Activated CD4-positive, alpha-beta memory T cell treated with anti-CD3 and anti-CD28 coated beads for 36 hours (primary cell): ENCODE measurements at regions of chr4 and their contacts with region 1.

Region 1: GRCh38 chr4:185576962-185577950 is 41.9 kb upstream of the PDLIM3 start:
- DNase-seq: no peak
- H3K4me3 Mint-ChIP-seq: no peak overlapping the region
- H3K27ac Mint-ChIP-seq: no peak overlapping the region
- H3K4me1 Mint-ChIP-seq: no peaks in the 10 kb centered on the region
- H3K27me3 Mint-ChIP-seq: peaks cover 12% of the 10 kb centered on the region

Region 2: DNA sequence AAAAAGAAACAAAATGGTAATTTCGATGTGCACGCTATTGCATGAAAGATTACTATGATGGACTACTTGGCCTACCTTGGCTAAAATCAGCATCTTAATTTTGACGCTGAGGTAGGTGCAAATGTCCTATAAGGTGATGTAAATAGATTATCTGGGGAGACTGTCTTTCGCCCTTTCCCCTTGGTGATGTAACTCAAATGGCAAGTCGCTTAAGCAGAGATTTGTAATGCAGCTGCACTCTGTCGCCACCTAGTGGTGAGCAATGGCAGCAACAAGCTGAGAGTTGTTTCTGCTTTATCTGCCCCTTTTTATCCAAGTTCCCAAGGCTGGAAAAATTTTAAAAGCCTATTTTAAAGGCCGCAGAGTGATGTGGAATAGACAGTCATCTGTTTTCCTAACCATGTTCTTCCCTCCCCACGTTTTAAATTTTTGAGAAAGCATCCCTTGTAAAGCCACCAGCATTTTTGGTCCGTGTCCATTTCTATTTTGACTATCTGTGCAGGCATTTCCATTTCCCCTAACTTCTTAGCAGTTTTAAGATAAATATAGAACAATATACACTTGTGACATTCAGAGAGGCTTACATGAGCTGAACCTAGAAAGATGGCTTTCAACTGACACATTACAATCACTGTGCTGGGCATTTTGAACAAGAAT is 20.4 kb after region 1 on chr4:
- CTCF ChIA-PET with region 1: interaction called, 20 read pairs
- POLR2A ChIA-PET with region 1: no interaction called
- intact Hi-C with region 1: no loop called
- DNase-seq: peak; percentile 78
- H3K4me3 Mint-ChIP-seq: no peak overlapping the region
- H3K27ac Mint-ChIP-seq: no peak overlapping the region
- H3K4me1 Mint-ChIP-seq: peaks cover 2% of the 10 kb centered on the region
- H3K27me3 Mint-ChIP-seq: peaks cover 19% of the 10 kb centered on the region